Sigmoid colon (tissue), 7 donors: ENCODE measurements at regions of chr2 and their contacts with region 1.

Region 1: GRCh38 chr2:177148477-177149154 is 64.0 kb upstream of the HNRNPA3 start:
- DNase-seq: peak; percentile 84
- H3K4me3 ChIP-seq: peak overlapping the region; percentile 21 to 43 (median 35)
- H3K27ac ChIP-seq: no peak overlapping the region
- H3K4me1 ChIP-seq: peaks cover 0 to 13% (median 5%) of the 10 kb centered on the region in 4 donors
- H3K27me3 ChIP-seq: peaks cover 0 to 6% (median 0%) of the 10 kb centered on the region in 3 donors
- CTCF ChIP-seq: peak; percentile 54 to 84 (median 66)
- EP300 ChIP-seq: no peak
- POLR2A ChIP-seq: no peak

Region 2: GRCh38 chr2:176140513-176141317 is 1007.9 kb before region 1 on chr2:
- intact Hi-C with region 1: loop called (anchors 5 kb)
- DNase-seq: peak; percentile 87
- H3K4me3 ChIP-seq: peak overlapping the region; percentile 39 to 52 (median 50)
- H3K27ac ChIP-seq: peak overlapping the region; percentile 49 to 87 (median 54)
- H3K4me1 ChIP-seq: peaks cover 0 to 30% (median 24%) of the 10 kb centered on the region in 4 donors
- H3K27me3 ChIP-seq: peaks cover 3 to 69% (median 51%) of the 10 kb centered on the region in 3 donors
- CTCF ChIP-seq: peak; percentile 87 to 96 (median 95)
- EP300 ChIP-seq: no peak
- POLR2A ChIP-seq: no peak

Region 3: DNA sequence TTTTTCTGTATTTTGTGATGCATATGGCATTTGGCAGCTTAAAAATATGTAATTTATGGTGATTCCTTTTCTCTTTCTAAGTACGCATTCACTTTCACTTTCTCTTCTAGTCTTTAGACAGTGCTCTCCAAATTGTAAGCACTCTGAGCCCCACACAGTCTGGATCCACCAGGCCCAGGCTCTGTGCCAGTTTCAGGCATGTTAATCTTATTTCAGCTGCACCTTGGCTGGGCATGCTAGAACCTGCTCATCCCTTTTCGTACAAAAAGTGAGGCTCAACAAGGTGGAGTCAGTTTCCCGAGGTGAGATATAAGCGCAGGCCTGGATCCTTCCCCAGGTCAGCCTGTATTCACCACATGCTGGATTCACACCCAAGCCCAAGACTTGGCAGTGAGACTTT is 675.4 kb before region 1 on chr2:
- intact Hi-C with region 1: no loop called
- DNase-seq: peak; percentile 76
- H3K4me3 ChIP-seq: peak overlapping the region in 3 of 4 donors; percentile 18 to 29 (median 27)
- H3K27ac ChIP-seq: peak overlapping the region in 2 of 4 donors; percentile 29 to 46
- H3K4me1 ChIP-seq: peaks cover 0 to 17% (median 7%) of the 10 kb centered on the region in 4 donors
- H3K27me3 ChIP-seq: no peaks in the 10 kb centered on the region
- CTCF ChIP-seq: no peak
- EP300 ChIP-seq: no peak
- POLR2A ChIP-seq: no peak

Region 4: DNA sequence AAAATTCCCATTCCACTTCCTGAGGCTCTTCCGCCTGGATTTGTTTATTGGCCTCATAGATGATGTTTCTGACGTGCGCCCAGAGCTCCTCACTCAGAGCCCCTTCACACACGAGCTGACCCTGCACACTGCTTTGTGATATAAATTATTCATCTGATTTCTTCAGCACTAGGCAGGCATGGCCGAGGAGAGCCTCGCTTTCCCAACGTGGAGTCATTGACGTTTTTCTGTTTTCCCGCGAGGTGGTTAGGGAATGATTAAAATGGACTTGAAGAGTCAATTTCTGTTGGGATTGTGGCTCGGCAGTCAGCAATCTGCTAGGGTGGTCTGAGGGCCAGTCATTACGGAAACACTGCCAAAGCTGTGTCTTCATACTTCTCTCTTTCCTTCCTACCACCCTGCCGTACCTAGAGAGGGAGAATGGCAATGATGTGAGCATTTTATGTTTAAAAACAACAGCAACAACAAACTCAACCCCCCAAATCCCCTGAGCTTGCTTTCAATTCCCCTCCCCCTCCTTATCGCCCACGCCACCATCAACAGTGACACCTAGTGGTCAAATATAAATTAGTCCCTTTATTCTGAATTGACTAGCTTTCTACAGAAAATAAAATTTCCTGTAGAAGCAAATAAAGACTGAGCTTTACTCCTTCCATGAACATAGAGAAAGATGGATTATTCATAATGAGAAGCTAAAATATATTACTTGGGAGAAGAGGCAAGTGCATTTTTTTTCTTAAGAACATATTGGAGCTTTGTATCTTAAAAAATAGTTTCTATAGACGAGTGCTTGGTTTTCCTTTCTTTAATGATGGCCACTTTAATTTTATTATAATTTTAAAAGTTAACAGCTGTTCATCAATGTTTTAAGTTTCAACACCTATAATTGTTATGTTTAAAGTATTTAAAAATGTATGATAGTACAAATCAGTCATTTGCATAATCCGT is 594.2 kb before region 1 on chr2:
- intact Hi-C with region 1: loop called (anchors 5 kb)
- DNase-seq: peak; percentile 68
- H3K4me3 ChIP-seq: peak overlapping the region; percentile 29 to 49 (median 38)
- H3K27ac ChIP-seq: peak overlapping the region; percentile 50 to 72 (median 67)
- H3K4me1 ChIP-seq: peaks cover 0 to 26% (median 19%) of the 10 kb centered on the region in 4 donors
- H3K27me3 ChIP-seq: no peaks in the 10 kb centered on the region
- CTCF ChIP-seq: peak; percentile 77 to 87 (median 82)
- EP300 ChIP-seq: no peak
- POLR2A ChIP-seq: no peak

Region 5: GRCh38 chr2:176653479-176654443 is 494.9 kb before region 1 on chr2:
- intact Hi-C with region 1: loop called (anchors 5 kb)
- DNase-seq: peak; percentile 81
- H3K4me3 ChIP-seq: no peak overlapping the region
- H3K27ac ChIP-seq: peak overlapping the region in 2 of 4 donors; percentile 42 to 47
- H3K4me1 ChIP-seq: peaks cover 0 to 12% (median 5%) of the 10 kb centered on the region in 4 donors
- H3K27me3 ChIP-seq: no peaks in the 10 kb centered on the region
- CTCF ChIP-seq: peak; percentile 44 to 78 (median 52)
- EP300 ChIP-seq: no peak
- POLR2A ChIP-seq: no peak

Region 6: DNA sequence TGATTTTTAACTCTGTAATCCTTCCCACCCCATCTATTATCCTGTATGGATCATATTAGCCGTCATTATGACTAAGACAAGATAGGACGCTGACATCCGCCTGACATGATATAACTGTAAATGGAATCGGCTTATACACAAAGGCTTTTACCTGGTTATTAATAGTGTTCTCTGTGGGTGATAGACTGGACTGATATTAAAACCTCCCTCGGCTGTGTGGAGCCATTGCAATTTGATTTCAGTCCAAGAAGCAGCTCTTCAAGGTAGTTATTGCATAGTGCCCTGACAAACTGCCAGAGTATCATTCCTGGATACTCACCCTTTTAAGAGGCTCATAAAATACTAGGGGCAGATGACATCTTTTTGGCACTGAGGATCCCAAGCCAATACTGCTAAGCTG is 162.1 kb before region 1 on chr2:
- intact Hi-C with region 1: loop called (anchors 10 kb)
- DNase-seq: no peak
- H3K4me3 ChIP-seq: no peak overlapping the region
- H3K27ac ChIP-seq: no peak overlapping the region
- H3K4me1 ChIP-seq: peaks cover 0 to 13% (median 10%) of the 10 kb centered on the region in 4 donors
- H3K27me3 ChIP-seq: no peaks in the 10 kb centered on the region
- CTCF ChIP-seq: no peak
- EP300 ChIP-seq: no peak
- POLR2A ChIP-seq: no peak

Region 7: DNA sequence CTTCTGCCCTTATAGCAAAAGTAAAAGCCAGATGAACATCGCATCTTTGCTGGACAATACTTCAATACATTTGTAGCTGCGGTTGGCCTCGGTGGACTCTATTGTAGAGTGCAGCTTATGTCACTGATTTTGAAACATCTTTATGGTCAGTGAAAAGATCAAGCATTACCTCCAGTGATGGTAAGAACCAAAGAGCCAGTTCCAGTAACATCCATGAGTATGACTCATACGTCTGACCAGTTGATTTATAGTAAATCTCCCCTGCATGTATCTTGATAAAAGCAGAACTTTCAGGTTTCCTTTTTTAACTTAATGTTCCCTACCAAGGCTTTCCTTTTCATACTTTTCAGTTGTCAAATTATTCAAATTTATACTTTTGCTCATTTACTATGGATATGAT is 55.2 kb before region 1 on chr2:
- intact Hi-C with region 1: no loop called
- DNase-seq: no peak
- H3K4me3 ChIP-seq: no peak overlapping the region
- H3K27ac ChIP-seq: no peak overlapping the region
- H3K4me1 ChIP-seq: no peaks in the 10 kb centered on the region
- H3K27me3 ChIP-seq: no peaks in the 10 kb centered on the region
- CTCF ChIP-seq: no peak
- EP300 ChIP-seq: no peak
- POLR2A ChIP-seq: no peak

Region 8: DNA sequence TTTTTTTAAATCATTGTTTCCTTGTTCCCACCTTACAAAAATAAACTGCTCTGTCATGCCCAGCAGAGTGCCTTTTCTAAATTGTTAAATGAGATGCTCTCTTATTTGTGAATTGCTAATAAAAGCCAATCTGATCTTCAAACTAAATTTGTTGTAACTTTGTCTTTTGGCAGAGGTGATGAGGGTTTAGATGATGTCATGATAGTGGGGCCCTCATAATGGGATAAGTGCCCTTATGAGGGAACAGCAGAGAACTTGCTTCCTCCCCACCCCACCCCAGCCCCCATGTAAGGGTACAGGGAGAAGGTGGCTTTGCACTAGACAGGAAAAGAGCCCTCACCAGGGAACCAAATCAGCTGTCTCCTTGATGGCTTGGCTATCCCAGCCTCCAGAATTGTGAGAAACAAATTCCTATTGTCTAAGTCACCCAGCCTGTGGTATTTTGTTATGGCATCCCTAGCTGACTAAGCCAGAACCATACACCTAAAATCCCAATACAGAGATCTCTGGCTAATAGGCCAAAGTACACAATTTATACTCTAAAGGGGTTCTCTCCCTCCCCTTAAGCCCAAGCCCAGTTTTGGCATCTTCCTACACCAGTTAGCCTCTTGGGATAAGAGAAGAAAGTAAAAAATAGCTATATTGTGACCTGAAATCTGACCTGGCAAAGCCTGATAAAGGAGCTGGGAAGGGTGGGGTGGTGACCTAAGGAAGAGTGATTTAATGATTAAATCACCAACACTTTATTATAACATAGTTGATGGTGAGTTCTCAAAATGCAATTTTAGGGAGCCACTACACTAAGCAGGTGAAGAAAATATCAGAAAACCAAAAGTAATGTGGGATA is 23.6 kb after region 1 on chr2:
- intact Hi-C with region 1: no loop called
- DNase-seq: no peak
- H3K4me3 ChIP-seq: no peak overlapping the region
- H3K27ac ChIP-seq: no peak overlapping the region
- H3K4me1 ChIP-seq: no peaks in the 10 kb centered on the region
- H3K27me3 ChIP-seq: no peaks in the 10 kb centered on the region
- CTCF ChIP-seq: no peak
- EP300 ChIP-seq: no peak
- POLR2A ChIP-seq: no peak